ENCODE measurements at regions of chr1 and their contacts with region 1.

Region 1: DNA sequence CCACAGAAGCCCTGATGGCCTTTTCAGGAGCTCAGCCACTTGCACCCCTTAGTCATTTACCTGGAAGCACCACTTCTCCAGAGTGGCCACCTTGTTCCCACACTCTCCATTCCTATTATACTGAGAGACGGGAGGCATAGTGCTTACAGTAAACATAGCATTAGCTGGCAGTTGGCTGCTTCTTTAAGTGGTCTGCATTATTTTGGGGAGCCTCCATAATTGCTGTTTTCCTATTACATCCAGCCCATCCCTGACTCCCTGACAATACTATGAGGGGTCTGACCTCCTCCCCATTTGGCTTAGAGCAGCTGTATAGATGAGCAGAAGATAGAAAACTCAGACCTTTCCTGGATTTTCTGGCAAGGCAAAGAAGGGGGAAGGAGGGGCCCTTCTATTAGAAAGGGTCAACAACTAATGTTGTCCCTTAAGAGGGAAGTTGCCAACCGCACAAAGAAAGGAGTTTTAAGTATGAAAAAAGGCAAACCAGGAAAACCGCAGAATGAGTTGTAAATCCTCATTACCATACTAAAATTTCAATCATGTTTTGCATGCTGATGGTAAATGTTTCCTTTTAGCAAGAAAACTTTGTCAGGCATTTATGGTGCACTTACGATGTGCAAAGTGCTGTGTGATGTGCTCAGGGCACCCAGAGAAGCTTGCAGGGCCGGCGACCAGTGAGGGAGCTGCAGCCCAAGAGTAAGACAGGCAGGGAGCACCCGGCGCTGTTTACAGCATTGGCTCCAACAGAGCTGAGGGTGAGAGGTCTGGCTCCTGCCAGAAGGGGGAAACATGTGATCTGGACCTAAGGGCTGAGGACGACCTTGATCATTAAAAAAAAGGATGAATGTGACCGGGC is 167.3 kb downstream of the ZZZ3 start:
- DNase-seq: no peak
- H3K4me3 ChIP-seq: no peak overlapping the region
- H3K27ac ChIP-seq: peak overlapping the region; percentile 98
- H3K27me3 ChIP-seq: no peaks in the 10 kb centered on the region
- CTCF ChIP-seq: peak; percentile 37

Region 2: GRCh38 chr1:77370583-77371306 is 144.4 kb before region 1 on chr1:
- CTCF ChIA-PET with region 1: no interaction called
- POLR2A ChIA-PET with region 1: interaction called, 13 read pairs
- DNase-seq: peak; percentile 96
- H3K4me3 ChIP-seq: peak overlapping the region; percentile 10; the same call in 1 of the 2 replicates
- H3K27ac ChIP-seq: peak overlapping the region; percentile 95
- H3K27me3 ChIP-seq: no peaks in the 10 kb centered on the region
- CTCF ChIP-seq: no peak

Region 3: GRCh38 chr1:77446841-77447555 is 68.2 kb before region 1 on chr1:
- CTCF ChIA-PET with region 1: no interaction called
- POLR2A ChIA-PET with region 1: no interaction called
- DNase-seq: no peak
- H3K4me3 ChIP-seq: no peak overlapping the region
- H3K27ac ChIP-seq: no peak overlapping the region
- H3K27me3 ChIP-seq: no peaks in the 10 kb centered on the region
- CTCF ChIP-seq: no peak

Region 4: DNA sequence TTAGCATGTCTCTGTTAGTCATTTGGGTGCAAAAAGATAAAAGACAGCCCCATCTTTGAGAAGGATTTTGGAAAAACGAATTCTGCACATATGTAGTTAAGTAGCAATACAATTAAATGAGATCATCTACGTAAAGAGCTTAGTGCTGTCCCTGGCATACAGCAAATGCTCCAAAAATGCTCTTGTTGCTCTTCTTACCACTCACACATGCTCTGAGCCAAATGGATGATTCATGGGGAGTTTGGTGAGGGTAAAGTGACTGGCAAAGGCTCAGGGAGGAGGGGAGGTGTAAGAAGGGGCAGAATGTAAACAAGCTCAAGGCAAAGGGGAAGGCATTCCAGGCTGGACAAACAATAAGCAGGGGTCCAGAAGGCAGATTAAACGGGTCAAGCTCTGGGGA is 41.5 kb before region 1 on chr1:
- CTCF ChIA-PET with region 1: no interaction called
- POLR2A ChIA-PET with region 1: interaction called, 11 read pairs
- DNase-seq: peak; percentile 70
- H3K4me3 ChIP-seq: no peak overlapping the region
- H3K27ac ChIP-seq: peak overlapping the region; percentile 54
- H3K27me3 ChIP-seq: no peaks in the 10 kb centered on the region
- CTCF ChIP-seq: no peak

Region 5: DNA sequence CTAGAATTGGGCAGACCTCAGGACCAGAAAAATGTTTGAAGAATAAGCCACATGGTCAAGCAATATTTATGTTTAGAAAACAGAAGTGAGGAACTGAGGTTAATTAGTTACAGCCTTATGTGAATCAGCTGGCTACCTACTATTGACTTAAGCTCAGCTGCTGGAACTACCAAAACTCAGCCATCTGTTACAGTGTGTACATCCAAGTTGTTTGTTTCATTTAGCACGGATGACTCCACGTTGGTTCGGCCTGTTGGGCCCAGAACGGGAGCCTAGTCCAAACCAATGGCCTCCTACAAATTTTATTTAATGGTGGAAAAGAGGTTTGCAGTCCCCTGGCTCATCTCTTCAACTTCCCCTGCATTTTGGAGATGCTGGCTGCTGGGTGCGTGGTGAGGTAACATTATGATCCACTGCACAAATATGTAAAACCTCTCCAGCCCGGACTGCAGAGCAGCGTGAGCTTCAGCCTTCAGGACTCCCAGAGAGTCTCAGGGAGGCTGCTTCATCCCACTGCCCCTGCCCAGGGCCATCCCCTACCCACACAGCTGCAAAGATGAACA is 23.9 kb after region 1 on chr1:
- CTCF ChIA-PET with region 1: interaction called, 24 read pairs
- POLR2A ChIA-PET with region 1: interaction called, 13 read pairs
- DNase-seq: peak; percentile 83
- H3K4me3 ChIP-seq: no peak overlapping the region
- H3K27ac ChIP-seq: peak overlapping the region; percentile 99
- H3K27me3 ChIP-seq: no peaks in the 10 kb centered on the region
- CTCF ChIP-seq: no peak

Region 6: DNA sequence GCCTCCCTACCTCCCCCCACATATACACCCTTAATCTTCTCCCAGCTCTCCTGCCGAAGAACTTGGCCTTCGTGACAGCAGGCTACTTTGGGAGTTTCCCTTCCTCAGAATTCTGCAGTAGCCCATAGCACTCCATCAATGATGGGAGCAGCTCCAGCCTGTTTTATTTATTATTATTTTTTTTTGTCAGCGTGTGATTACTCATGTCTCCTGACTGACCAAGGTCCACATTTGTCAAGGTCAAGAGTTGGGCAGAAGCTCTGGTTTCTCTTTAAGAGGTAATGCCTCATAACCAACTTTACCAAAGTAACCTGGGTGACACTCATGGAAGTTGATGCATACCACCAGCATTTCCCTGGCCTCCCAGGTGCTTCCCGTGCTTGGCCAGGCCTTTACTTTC is 41.9 kb after region 1 on chr1:
- CTCF ChIA-PET with region 1: no interaction called
- POLR2A ChIA-PET with region 1: no interaction called
- DNase-seq: no peak
- H3K4me3 ChIP-seq: no peak overlapping the region
- H3K27ac ChIP-seq: no peak overlapping the region
- H3K27me3 ChIP-seq: no peaks in the 10 kb centered on the region
- CTCF ChIP-seq: no peak

Region 7: DNA sequence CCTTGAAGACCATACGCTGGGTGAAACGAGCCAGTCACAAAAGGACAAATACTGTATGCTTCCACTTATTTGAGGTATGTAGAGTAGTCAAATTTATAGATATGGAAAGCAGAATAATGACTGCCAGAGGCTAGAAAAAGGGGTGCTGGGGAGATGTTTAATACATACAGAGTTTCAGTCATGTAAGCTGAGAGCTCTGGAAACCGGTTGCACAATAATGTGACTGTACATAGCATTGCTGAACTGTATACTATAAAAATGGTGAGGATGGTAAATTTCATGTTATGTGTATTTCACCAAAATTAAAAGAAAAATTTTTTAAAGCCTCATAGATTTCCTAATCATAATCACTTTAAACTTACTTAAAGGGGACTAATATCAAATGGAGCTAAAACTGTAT is 56.5 kb after region 1 on chr1:
- CTCF ChIA-PET with region 1: no interaction called
- POLR2A ChIA-PET with region 1: no interaction called
- DNase-seq: no peak
- H3K4me3 ChIP-seq: no peak overlapping the region
- H3K27ac ChIP-seq: no peak overlapping the region
- H3K27me3 ChIP-seq: no peaks in the 10 kb centered on the region
- CTCF ChIP-seq: no peak

Measured in AG04450 (cell line).